Motor neuron (in vitro differentiated cells): ENCODE measurements at regions of chr11 and their contacts with region 1.

Region 1: DNA sequence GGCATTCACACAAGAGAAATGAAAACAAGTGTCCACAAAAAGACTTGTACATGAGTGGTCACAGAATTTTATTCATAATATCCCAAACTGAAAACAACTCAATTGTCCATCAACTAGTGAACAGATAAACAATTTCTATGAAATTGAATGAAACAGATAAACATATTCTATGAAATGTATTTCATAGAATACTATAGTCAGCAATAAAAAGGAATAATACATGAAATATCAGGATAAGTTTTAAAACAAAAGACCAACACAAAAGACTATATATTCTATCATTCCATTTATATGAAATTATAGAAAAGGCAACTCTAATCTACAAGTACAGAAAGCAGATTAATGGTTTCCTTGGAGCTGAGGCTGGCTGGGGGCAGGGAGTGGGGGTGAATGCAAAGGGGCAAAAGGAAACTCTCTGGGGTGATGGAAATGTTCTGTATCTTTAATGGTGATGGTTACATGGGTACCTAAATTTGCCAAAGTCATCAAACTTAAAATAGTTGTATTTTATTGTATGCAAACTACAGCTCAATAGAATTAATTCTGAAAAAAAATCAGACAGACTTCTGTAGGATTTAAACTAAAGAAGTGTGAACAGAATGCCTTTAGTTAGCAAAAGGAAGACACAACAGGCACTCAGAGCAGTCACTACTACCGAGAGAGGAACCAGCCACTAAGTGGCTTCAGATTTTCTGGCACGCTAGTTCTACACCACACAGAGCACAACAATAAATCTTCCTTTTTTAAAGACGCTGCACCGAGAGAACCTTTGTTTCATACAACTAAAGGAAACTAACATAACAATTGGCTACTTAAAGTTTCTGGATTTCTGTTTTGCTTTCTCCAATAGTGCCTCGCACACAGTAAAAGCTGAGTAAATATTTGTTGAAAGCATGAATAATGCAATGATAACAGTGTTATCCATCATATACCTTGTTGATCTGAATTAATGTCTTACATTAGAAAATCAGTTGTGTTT is 15.4 kb downstream of the CCDC34 start:
- ATAC-seq: peak in 6 of 8 experiments; percentile 89 to 99 (median 94)
- H3K4me3 ChIP-seq: peak overlapping the region in 1 of 5 donors; percentile 9
- H3K27ac ChIP-seq: peak overlapping the region in 1 of 2 donors; percentile 71
- H3K4me1 ChIP-seq: peaks cover 12% of the 10 kb centered on the region in 2 donors

Region 2: GRCh38 chr11:26493616-26494015 is 854.0 kb before region 1 on chr11:
- in situ Hi-C with region 1: no loop called
- ATAC-seq: no peak
- H3K4me3 ChIP-seq: no peak overlapping the region
- H3K27ac ChIP-seq: no peak overlapping the region
- H3K4me1 ChIP-seq: no peaks in the 10 kb centered on the region

Region 3: GRCh38 chr11:26960281-26960680 is 387.4 kb before region 1 on chr11:
- in situ Hi-C with region 1: no loop called
- ATAC-seq: peak in 3 of 8 experiments; percentile 88 to 93 (median 92)
- H3K4me3 ChIP-seq: no peak overlapping the region
- H3K27ac ChIP-seq: no peak overlapping the region
- H3K4me1 ChIP-seq: peaks cover 0 to 12% of the 10 kb centered on the region in 2 donors

Region 4: DNA sequence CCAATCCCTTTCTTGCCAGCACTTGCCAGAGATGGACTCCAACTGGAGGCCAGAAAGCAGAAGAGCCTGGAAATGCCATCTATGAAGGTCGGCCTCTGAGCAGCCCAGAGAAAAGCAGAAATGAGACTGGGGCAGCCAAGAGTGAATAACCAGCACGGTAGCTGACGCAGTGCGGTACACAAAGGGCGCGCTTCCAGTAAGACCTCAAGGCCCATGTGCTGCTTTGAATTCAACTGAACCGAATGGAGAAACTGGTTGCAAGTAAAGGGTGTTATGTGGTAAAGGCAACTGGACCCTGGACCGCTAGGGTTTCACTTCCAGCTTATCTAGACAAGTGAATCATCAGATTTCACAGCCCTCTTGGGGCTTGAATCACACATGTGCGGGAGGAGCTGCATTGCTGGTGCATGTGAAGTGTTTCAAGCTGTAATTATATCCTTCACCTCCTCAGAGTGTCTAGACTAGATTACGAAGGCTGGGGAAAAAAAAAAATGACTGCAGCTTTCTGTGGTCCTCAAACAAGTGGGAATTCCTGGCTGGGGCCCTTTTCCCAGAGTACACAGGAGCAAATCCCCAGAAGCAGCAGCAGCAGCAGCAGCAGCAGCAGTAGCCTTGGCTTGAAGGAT is 113.5 kb before region 1 on chr11:
- in situ Hi-C with region 1: loop called in 1 of 9 experiments (anchors 25 kb)
- ATAC-seq: peak; percentile 77 to 95 (median 88)
- H3K4me3 ChIP-seq: no peak overlapping the region
- H3K27ac ChIP-seq: peak overlapping the region in 1 of 2 donors; percentile 9
- H3K4me1 ChIP-seq: peaks cover 8 to 11% of the 10 kb centered on the region in 2 donors